IMR-90 (cell line): ENCODE measurements at regions of chr10 and their contacts with region 1.

Region 1: GRCh38 chr10:34407324-34407805 is 407.7 kb downstream of the PARD3 start:
- DNase-seq: peak; percentile 64
- ATAC-seq: no peak
- H3K4me3 ChIP-seq: no peak overlapping the region
- H3K27ac ChIP-seq: no peak overlapping the region
- H3K4me1 ChIP-seq: peaks cover 9% of the 10 kb centered on the region
- H3K27me3 ChIP-seq: no peaks in the 10 kb centered on the region
- CTCF ChIP-seq: no peak
- POLR2A ChIP-seq: no peak
- RAD21 ChIP-seq: no peak

Region 2: DNA sequence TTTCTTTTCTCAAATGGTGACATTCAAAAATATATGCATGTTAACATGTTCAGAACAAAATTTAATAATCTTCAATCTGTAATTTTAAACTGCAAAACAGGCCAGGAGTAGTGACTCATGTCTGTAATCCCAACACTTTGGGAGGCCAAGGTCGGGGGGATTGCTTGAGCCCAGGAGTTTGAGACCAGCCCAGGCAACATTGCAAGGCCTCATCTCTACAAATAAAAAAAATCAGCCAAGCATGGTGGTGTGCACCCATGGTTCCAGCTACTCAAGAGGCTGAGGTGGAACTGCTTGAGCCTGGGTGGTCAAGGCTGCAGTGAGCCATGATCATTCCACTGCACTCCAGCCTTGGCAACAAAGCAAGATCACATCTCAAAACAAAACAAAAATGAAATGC is 13.4 kb after region 1 on chr10:
- CTCF ChIA-PET with region 1: no interaction called
- POLR2A ChIA-PET with region 1: no interaction called
- dilution Hi-C with region 1: no loop called
- in situ Hi-C with region 1: no loop called
- intact Hi-C with region 1: loop called (anchors 2 kb)
- DNase-seq: no peak
- ATAC-seq: no peak
- H3K4me3 ChIP-seq: no peak overlapping the region
- H3K27ac ChIP-seq: no peak overlapping the region
- H3K4me1 ChIP-seq: 0 out of 2 replicates have a peak, but pooled peaks cover 2% of the 10 kb centered on the region
- H3K27me3 ChIP-seq: no peaks in the 10 kb centered on the region
- CTCF ChIP-seq: no peak
- POLR2A ChIP-seq: no peak
- RAD21 ChIP-seq: no peak